PC-3 (cell line): ENCODE measurements at regions of chr2 and their contacts with region 1.

Region 1: GRCh38 chr2:158745044-158745865 is 49.9 kb upstream of the DAPL1 start:
- DNase-seq: peak; percentile 76
- ATAC-seq: peak; percentile 75
- H3K4me3 ChIP-seq: no peak overlapping the region
- H3K27ac ChIP-seq: no peak overlapping the region
- H3K4me1 ChIP-seq: no peaks in the 10 kb centered on the region; the same call in 1 of the 2 replicates
- H3K27me3 ChIP-seq: no peaks in the 10 kb centered on the region
- CTCF ChIP-seq: peak; percentile 87

Region 2: GRCh38 chr2:158024288-158024898 is 720.9 kb before region 1 on chr2:
- CTCF ChIA-PET with region 1: interaction called, 13 read pairs
- POLR2A ChIA-PET with region 1: no interaction called
- intact Hi-C with region 1: no loop called
- DNase-seq: peak; percentile 74
- ATAC-seq: peak; percentile 71
- H3K4me3 ChIP-seq: no peak overlapping the region
- H3K27ac ChIP-seq: no peak overlapping the region
- H3K4me1 ChIP-seq: no peaks in the 10 kb centered on the region
- H3K27me3 ChIP-seq: no peaks in the 10 kb centered on the region
- CTCF ChIP-seq: peak; percentile 89

Region 3: GRCh38 chr2:158179660-158180059 is 565.6 kb before region 1 on chr2:
- CTCF ChIA-PET with region 1: interaction called, 3 read pairs
- POLR2A ChIA-PET with region 1: no interaction called
- intact Hi-C with region 1: loop called (anchors 2 kb)
- DNase-seq: peak; percentile 45
- ATAC-seq: peak; percentile 64
- H3K4me3 ChIP-seq: no peak overlapping the region
- H3K27ac ChIP-seq: no peak overlapping the region
- H3K4me1 ChIP-seq: peaks cover 23% of the 10 kb centered on the region
- H3K27me3 ChIP-seq: peaks cover 4% of the 10 kb centered on the region
- CTCF ChIP-seq: peak; percentile 64

Region 4: DNA sequence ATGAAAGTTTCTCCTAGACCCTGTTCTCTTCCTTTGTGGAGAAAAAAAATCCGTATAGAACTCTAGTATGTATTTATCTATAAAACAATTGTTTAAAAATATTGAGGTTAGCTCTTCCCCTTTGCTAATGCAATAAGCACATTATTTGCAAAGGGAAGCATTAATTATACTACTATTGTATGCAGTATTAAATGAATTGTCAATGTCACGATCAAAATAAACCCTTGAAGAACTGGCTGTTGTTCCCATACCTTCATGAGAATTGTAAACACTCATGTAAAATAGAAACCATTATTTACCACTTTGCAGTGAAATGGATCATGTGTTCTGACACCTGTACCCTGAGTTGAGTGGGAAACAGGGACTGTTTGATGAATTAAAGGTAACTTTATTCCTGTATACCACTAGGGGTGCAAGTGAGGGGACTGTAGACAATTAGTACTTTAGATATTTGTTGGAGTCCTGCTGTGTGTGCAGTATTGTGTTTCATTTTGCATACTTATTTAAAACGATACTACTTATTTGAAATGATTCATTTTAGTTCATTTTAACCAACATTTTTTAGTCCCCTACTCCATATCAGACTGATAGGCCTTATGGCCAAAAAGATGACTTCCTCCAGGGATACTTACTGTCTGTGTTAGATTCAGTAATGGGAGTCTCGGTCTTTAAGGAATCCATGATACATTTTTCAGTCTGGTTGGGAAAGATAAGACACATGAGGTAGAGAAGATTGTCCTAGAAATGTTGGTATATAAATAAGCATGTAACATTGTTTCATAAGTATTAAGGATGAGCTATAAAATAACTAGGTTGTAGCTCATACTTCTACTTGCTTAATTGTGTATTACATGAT is 280.6 kb before region 1 on chr2:
- CTCF ChIA-PET with region 1: no interaction called
- POLR2A ChIA-PET with region 1: no interaction called
- intact Hi-C with region 1: loop called (anchors 2 kb)
- DNase-seq: peak; percentile 39
- ATAC-seq: peak; percentile 49; the same call in 1 of the 2 replicates
- H3K4me3 ChIP-seq: no peak overlapping the region
- H3K27ac ChIP-seq: no peak overlapping the region
- H3K4me1 ChIP-seq: peaks cover 17% of the 10 kb centered on the region
- H3K27me3 ChIP-seq: no peaks in the 10 kb centered on the region
- CTCF ChIP-seq: peak; percentile 78

Region 5: GRCh38 chr2:158619496-158619895 is 125.8 kb before region 1 on chr2:
- CTCF ChIA-PET with region 1: interaction called, 7 read pairs
- POLR2A ChIA-PET with region 1: no interaction called
- intact Hi-C with region 1: loop called (anchors 5 kb)
- DNase-seq: peak; percentile 75
- ATAC-seq: peak; percentile 98
- H3K4me3 ChIP-seq: no peak overlapping the region
- H3K27ac ChIP-seq: peak overlapping the region; percentile 56
- H3K4me1 ChIP-seq: peaks cover 12% of the 10 kb centered on the region
- H3K27me3 ChIP-seq: no peaks in the 10 kb centered on the region
- CTCF ChIP-seq: no peak

Region 6: GRCh38 chr2:158773121-158773520 is 27.9 kb after region 1 on chr2:
- CTCF ChIA-PET with region 1: no interaction called
- POLR2A ChIA-PET with region 1: no interaction called
- intact Hi-C with region 1: no loop called
- DNase-seq: peak; percentile 9
- ATAC-seq: no peak
- H3K4me3 ChIP-seq: no peak overlapping the region
- H3K27ac ChIP-seq: no peak overlapping the region
- H3K4me1 ChIP-seq: no peaks in the 10 kb centered on the region
- H3K27me3 ChIP-seq: no peaks in the 10 kb centered on the region
- CTCF ChIP-seq: no peak

Region 7: DNA sequence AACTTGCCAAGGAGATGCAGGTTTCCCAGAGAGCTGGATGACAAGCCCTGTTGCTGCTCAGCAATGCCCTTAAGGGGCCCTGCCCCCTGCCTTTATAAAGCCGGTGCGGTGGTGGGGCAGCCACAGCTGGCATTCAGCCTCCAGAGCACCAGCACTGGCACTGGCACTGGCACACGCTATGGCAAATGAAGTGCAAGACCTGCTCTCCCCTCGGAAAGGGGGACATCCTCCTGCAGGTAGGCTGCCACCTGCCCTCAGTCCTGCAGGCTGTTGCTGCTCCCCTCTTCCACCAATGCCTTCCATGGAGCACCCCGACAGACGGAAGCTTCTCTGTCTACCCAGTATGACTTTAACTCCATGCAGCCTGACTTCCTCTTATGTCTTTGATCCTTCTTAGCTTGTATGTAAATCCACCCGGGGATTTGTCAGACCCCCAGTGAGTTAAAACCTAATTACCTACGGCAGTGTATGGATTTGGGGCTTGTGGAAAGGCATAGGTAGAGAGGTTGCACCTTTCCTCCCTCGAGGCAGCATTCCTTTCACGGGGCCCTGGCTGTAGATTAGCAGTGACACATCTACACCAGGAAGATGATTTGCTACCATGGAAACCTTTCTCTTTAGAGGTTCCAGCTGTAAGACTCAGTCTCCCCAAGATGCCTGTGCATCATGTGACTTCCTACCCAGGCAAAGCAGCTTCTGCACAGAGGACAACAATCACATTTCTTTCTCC is 50.1 kb after region 1 on chr2 and contains the start of gene DAPL1:
- CTCF ChIA-PET with region 1: no interaction called
- POLR2A ChIA-PET with region 1: no interaction called
- intact Hi-C with region 1: no loop called
- DNase-seq: no peak
- ATAC-seq: no peak
- H3K4me3 ChIP-seq: no peak within 1 kb of the TSS
- H3K27ac ChIP-seq: no peak within 1 kb of the TSS
- H3K4me1 ChIP-seq: no peaks in the 10 kb centered on the region
- H3K27me3 ChIP-seq: peaks cover 58% of the 10 kb centered on the region
- CTCF ChIP-seq: no peak
- total RNA-seq, gene DAPL1: not detected in 2 replicates